ENCODE measurements at regions of chr12 and their contacts with region 1.

Region 1: GRCh38 chr12:110600254-110600653 is 13.7 kb upstream of the TCTN1 start:
- DNase-seq: no peak
- ATAC-seq: peak in 3 of 4 donors; percentile 52 to 61 (median 58)
- H3K4me3 ChIP-seq: no peak overlapping the region
- H3K27ac ChIP-seq: no peak overlapping the region
- H3K4me1 ChIP-seq: peaks cover 0 to 25% (median 0%) of the 10 kb centered on the region in 12 donors
- H3K27me3 ChIP-seq: no peaks in the 10 kb centered on the region
- CTCF ChIP-seq: peak in 11 of 12 donors; percentile 15 to 55 (median 43)
- POLR2A ChIP-seq: no peak

Region 2: GRCh38 chr12:110093631-110094311 is 506.5 kb before region 1 on chr12:
- intact Hi-C with region 1: loop called in 1 of 10 experiments (anchors 10 kb)
- DNase-seq: no peak
- ATAC-seq: no peak
- H3K4me3 ChIP-seq: no peak overlapping the region
- H3K27ac ChIP-seq: no peak overlapping the region
- H3K4me1 ChIP-seq: no peaks in the 10 kb centered on the region
- H3K27me3 ChIP-seq: peaks cover 0 to 5% (median 0%) of the 10 kb centered on the region in 9 donors
- CTCF ChIP-seq: no peak
- POLR2A ChIP-seq: no peak

Region 3: DNA sequence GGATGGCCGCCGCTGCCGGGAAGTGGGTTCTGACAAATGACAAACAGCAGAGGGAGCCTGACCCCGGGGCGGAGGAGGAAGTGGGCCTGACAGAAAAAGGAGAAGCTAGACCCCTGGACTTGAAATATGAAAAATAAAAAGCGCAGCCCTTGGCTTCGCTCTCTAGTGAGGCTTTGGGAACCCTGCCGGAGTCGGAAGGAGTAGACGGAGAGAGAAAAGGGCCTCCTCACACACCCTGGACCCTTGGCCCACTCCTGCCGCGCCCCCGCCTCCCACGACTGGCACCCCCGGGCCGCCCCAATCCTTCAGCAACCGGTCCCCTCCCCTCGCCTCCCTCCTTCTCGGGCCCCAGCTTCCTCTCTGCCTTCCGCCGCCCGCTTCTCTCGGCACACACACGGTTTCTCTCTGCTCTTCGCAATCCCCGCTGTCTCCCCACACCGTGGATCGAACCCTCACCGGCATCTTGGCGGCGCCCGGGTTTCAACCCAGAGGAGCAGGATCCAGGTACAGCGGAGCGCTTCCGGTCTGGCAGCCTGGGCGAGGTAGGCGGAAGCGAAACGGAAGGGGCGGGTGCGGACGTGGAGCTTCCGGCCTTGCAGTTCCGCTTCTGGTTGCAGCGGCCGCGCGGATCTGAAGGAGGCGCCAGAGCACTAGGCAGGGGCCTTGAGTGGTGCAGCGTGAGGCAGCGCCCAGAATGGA is 150.3 kb before region 1 on chr12 and contains the start of gene ARPC3:
- intact Hi-C with region 1: loop called in 9 of 10 experiments (anchors 1 to 5 kb)
- DNase-seq: peak; percentile 94 to 97 (median 95)
- ATAC-seq: peak; percentile 98 to 99 (median 99)
- H3K4me3 ChIP-seq: peak within 1 kb of the TSS; percentile 62 to 96 (median 85)
- H3K27ac ChIP-seq: peak within 1 kb of the TSS; percentile 74 to 99 (median 92)
- H3K4me1 ChIP-seq: peaks cover 0 to 46% (median 14%) of the 10 kb centered on the region in 12 donors
- H3K27me3 ChIP-seq: no peaks in the 10 kb centered on the region
- CTCF ChIP-seq: peak; percentile 76 to 96 (median 86)
- POLR2A ChIP-seq: peak in 1 of 2 donors; percentile 73
- total RNA-seq, gene ARPC3: 77.2 to 251 (median 108) TPM

Region 4: DNA sequence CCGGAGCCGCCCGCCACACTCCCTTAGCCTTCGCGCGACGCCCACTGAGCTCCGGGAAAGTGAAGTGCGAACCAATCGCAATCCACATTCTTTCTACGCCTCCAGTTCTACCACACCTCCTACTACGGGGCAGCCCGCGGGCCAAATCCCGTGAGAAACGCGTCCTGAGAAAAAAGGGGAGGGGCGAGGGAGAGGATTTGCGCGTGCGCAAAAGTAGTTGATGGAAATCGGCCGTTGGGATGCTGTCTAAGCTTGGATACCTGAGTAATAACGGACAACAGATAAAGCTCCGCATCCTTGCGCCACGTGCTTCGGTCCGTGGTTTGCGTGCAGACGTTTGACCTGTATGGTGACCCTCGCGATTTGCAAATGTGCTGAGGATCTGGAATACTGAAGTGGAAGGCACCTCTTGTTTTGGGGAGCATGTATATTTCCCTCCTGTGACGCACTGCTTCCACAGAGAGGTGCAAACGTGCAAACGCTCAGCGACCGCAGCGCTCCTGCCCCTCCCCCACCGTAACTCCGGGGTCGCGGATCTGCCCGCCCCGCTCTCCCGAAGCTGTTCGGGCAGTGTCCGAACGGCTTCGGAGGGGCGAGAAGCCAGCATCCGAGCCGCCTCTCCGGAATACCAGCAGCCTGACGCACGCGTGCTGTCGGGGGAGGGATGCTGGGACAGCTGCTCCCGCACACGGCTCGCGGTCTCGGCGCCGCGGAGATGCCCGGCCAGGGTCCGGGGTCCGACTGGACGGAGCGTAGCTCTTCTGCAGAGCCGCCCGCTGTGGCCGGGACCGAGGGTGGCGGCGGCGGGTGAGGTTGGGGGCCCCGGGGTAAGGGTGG is 131.8 kb before region 1 on chr12 and contains the starts of genes FAM216A and GPN3:
- intact Hi-C with region 1: loop called in 4 of 10 experiments (anchors 5 kb)
- DNase-seq: peak; percentile 96 to 98 (median 97)
- ATAC-seq: peak; percentile 95 to 97 (median 96)
- H3K4me3 ChIP-seq: peak within 1 kb of the TSS; percentile 59 to 97 (median 78)
- H3K27ac ChIP-seq: peak within 1 kb of the TSS in 11 of 12 donors; percentile 83 to 97 (median 87)
- H3K4me1 ChIP-seq: peaks cover 0 to 30% (median 16%) of the 10 kb centered on the region in 12 donors
- H3K27me3 ChIP-seq: no peaks in the 10 kb centered on the region
- CTCF ChIP-seq: no peak
- POLR2A ChIP-seq: peak in 1 of 2 donors; percentile 66
- total RNA-seq, gene FAM216A: 3.6 to 8.0 (median 4.7) TPM
- total RNA-seq, gene GPN3: 14.5 to 37.0 (median 28.4) TPM

Region 5: GRCh38 chr12:110508071-110508586 is 92.1 kb before region 1 on chr12:
- intact Hi-C with region 1: loop called in 8 of 10 experiments (anchors 1 to 5 kb)
- DNase-seq: no peak
- ATAC-seq: no peak
- H3K4me3 ChIP-seq: no peak overlapping the region
- H3K27ac ChIP-seq: no peak overlapping the region
- H3K4me1 ChIP-seq: peaks cover 0 to 4% (median 0%) of the 10 kb centered on the region in 12 donors
- H3K27me3 ChIP-seq: no peaks in the 10 kb centered on the region
- CTCF ChIP-seq: no peak
- POLR2A ChIP-seq: no peak

Region 6: GRCh38 chr12:110513842-110514241 is 86.4 kb before region 1 on chr12:
- intact Hi-C with region 1: loop called (anchors 1 to 5 kb)
- DNase-seq: no peak
- ATAC-seq: no peak
- H3K4me3 ChIP-seq: no peak overlapping the region
- H3K27ac ChIP-seq: no peak overlapping the region
- H3K4me1 ChIP-seq: peaks cover 0 to 4% (median 0%) of the 10 kb centered on the region in 12 donors
- H3K27me3 ChIP-seq: no peaks in the 10 kb centered on the region
- CTCF ChIP-seq: no peak
- POLR2A ChIP-seq: no peak

Region 7: GRCh38 chr12:110549716-110550115 is 50.5 kb before region 1 on chr12:
- intact Hi-C with region 1: loop called in 4 of 10 experiments (anchors 5 kb)
- DNase-seq: no peak
- ATAC-seq: peak in 3 of 4 donors; percentile 27 to 52 (median 30)
- H3K4me3 ChIP-seq: no peak overlapping the region
- H3K27ac ChIP-seq: peak overlapping the region; percentile 12 to 90 (median 64)
- H3K4me1 ChIP-seq: peaks cover 0 to 65% (median 26%) of the 10 kb centered on the region in 12 donors
- H3K27me3 ChIP-seq: no peaks in the 10 kb centered on the region
- CTCF ChIP-seq: no peak
- POLR2A ChIP-seq: no peak

Measured in heart left ventricle (tissue), 16 donors.